Prostate gland (tissue), 2 donors: ENCODE measurements at regions of chr3 and their contacts with region 1.

Region 1: DNA sequence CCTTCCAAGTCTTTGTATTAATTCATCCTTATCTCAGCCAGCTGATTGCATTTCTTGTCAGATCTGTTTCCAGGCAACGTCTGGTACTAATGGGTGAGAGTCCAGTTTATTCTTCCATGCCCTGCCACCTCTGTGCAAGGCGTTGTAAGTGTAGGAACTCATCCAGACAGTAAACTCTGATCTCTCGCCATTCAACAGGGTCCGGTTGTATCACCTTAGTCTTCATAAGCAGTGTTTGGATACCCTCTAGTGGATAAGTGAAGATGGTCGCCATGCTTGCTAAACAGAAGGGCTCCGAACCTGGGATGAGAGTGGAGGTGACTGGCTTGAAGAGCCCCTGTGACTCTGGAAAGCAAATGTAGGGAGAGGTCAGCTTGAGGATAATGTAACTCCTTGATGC is 51.6 kb upstream of the CMTM7 start:
- DNase-seq: peak; percentile 48
- H3K4me3 ChIP-seq: no peak overlapping the region
- H3K27ac ChIP-seq: no peak overlapping the region
- H3K4me1 ChIP-seq: no peaks in the 10 kb centered on the region
- H3K27me3 ChIP-seq: no peaks in the 10 kb centered on the region
- CTCF ChIP-seq: peak in 3 of 4 experiments; percentile 55 to 66 (median 56)
- POLR2A ChIP-seq: no peak

Region 2: GRCh38 chr3:31880020-31880419 is 460.0 kb before region 1 on chr3:
- intact Hi-C with region 1: no loop called
- DNase-seq: no peak
- H3K4me3 ChIP-seq: no peak overlapping the region
- H3K27ac ChIP-seq: no peak overlapping the region
- H3K4me1 ChIP-seq: no peaks in the 10 kb centered on the region
- H3K27me3 ChIP-seq: no peaks in the 10 kb centered on the region
- CTCF ChIP-seq: no peak
- POLR2A ChIP-seq: no peak

Region 3: DNA sequence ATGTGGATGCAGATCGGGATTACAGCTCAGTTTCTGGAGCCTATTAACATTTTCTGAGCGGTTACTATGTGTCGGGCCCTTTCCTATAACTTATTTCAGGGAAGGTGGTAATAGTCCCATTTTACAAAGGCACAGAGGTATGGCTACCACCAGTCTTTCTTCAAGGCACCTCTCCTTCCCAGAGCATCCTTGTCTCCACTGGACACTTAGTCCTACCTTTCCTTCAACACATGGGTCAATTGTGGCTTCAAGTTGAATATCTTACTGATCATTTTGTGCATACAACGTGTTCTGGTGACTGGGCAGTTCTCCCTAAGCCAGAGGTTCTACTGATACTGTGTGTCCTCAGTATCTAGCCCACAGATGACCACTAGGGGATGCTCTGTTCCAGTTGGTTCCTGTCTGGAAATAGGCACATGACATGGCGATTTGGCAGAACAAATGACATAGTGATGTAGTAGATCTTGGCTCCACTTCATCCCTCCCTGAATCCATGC is 162.3 kb before region 1 on chr3:
- intact Hi-C with region 1: loop called (anchors 5 kb)
- DNase-seq: peak; percentile 62
- H3K4me3 ChIP-seq: no peak overlapping the region
- H3K27ac ChIP-seq: no peak overlapping the region
- H3K4me1 ChIP-seq: no peaks in the 10 kb centered on the region
- H3K27me3 ChIP-seq: no peaks in the 10 kb centered on the region
- CTCF ChIP-seq: peak; percentile 42 to 77 (median 68)
- POLR2A ChIP-seq: no peak

Region 4: DNA sequence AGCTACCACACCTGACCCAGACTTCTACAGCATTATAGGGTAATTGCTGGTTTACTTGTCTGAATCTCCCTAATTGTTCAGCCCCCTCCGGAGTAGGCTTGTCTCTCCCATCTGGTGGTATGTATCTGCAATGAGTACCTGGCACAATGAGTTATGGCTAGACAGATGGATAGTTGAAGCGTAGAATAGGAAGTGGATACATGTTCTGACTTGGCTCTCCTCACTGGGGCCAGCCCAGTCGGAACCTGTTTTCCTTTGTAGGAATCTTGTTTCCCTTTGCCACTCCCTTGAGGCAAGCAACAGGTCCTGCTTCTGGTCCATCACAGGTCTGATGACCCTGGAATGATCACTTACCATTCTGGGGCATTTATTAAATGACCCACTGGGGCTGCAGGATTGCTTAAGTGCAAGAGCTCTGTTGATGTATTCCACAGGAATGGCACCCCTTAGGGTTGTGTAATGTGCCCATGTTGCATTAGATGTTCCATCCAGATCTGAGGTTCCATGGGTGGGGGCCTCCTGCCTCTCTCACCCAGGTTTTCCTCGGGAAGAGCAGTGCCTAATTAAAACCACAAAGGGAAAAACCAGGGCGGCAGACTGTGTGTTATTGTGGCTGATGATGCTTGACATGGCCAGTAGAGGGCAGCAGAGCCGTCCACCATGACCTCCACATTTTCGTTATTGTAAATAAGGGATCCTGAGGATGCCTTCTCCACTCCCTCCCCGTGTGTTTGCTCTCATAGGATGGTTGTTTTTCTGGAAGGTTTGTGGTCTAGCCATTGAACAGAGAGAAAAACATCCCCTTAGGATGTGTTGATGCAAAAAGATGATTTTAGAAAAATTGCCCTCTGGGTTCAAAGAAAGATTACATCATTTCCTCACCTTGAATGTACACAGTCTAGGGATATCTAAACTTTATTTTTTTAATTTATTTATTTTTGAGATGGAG is 43.5 kb before region 1 on chr3:
- intact Hi-C with region 1: loop called (anchors 5 kb)
- DNase-seq: peak; percentile 40
- H3K4me3 ChIP-seq: no peak overlapping the region
- H3K27ac ChIP-seq: no peak overlapping the region
- H3K4me1 ChIP-seq: no peaks in the 10 kb centered on the region
- H3K27me3 ChIP-seq: no peaks in the 10 kb centered on the region
- CTCF ChIP-seq: peak; percentile 71 to 80 (median 78)
- POLR2A ChIP-seq: no peak